ENCODE measurements at regions of chr1 and their contacts with region 1.

Region 1: DNA sequence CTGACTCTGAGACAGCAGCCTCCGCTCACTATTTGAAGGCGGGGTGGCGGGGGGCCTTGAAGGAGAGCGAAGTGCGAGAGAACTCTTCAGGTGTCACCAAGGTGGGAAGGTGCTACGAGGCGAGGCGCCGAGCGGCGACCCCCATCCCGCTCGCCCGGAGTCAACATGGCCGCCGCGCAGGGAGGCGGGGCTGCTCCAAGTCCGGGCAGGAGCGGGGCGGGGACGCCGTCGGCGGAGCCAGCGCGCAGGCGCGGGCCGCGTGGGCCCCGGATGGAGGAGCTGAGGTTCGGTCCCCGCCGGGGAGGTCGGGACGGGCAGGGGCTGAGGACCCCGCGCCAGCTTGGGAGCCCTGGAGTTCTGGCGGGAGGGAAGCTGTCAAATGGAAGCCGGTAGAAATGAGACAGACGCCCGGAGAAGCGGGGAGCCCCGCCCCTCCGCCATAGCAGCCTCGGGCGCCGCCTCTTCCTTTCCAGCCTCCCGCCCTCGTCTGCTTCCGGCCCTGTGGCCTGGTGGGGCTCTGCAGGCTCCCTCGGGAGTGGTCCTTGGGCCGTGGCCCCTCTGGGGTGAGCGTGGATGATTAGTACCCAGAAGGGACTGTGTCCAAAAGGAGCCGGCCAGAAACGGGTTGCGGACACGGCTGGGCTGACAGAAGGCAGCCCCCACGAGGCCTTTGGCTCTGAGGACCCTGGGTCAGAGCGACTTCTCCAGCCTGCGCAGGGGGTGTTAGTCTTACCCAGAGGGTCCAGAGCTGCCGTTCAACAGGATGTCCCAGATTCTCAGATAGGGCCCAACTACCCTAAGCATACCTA is at the start of gene PIGV:
- DNase-seq: peak; percentile 97
- H3K4me3 Mint-ChIP-seq: peak within 1 kb of the TSS; percentile 100
- H3K27ac Mint-ChIP-seq: peak within 1 kb of the TSS; percentile 100
- H3K4me1 Mint-ChIP-seq: peaks cover 67% of the 10 kb centered on the region
- H3K27me3 Mint-ChIP-seq: no peaks in the 10 kb centered on the region
- total RNA-seq, gene PIGV: 15.2 and 16.0 TPM in 2 replicates

Region 2: GRCh38 chr1:26582836-26583460 is 205.0 kb before region 1 on chr1:
- intact Hi-C with region 1: loop called (anchors 1 kb)
- DNase-seq: peak; percentile 79
- H3K4me3 Mint-ChIP-seq: peak overlapping the region; percentile 47
- H3K27ac Mint-ChIP-seq: peak overlapping the region; percentile 92
- H3K4me1 Mint-ChIP-seq: peaks cover 48% of the 10 kb centered on the region
- H3K27me3 Mint-ChIP-seq: peaks cover 2% of the 10 kb centered on the region

Region 3: DNA sequence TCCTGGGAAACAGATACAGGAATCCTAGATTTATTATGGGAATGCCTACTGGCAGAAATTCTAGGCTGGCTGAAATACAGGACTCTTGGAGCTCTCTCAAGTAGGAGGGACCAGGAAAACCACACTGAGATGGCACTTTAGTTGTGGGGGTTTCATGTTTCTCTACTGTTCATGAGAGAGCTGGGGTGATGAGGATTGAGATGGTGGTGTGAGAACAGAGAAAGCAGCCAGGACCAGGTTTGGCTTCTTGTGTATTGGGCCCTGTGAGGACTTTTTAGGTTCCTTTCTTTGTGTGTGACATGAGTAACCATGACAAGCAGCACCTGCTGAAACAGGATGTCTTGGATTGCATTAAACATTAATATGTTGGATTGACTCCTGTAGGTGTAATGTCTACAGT is 87.2 kb before region 1 on chr1:
- intact Hi-C with region 1: loop called (anchors 1 kb)
- DNase-seq: no peak
- H3K4me3 Mint-ChIP-seq: no peak overlapping the region
- H3K27ac Mint-ChIP-seq: no peak overlapping the region
- H3K4me1 Mint-ChIP-seq: peaks cover 7% of the 10 kb centered on the region
- H3K27me3 Mint-ChIP-seq: no peaks in the 10 kb centered on the region

Region 4: DNA sequence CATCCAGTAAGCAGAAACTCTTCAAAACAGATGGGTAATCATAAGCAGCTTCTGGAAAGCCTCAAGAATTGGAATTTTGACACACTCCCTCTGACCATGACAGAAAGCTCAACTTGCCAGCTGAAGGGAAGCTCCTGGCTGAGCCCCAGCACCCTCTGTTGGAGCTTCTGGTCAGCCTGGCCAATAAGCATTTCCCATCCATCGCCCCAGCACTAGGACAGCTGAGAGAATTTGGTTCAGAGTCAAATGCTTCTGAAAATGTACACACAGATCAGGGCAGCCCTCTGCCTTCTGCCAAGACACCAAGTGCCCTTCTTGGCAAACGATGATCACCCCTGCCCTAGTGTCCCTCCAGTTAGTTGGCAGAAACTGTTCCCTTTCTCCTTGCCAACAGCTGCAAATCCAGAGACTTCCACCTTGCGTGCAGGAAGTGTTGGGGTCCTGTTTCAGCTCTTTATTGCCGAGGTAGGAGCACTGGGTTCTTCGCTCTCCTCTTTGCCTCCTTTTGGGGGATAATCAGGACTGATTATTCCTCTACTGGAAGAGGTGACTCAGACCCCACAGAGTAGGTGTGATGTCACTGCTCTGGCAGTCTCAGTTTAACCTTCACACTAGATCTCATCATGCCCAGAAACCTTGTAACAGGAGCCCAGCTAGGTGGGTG is 11.7 kb after region 1 on chr1:
- intact Hi-C with region 1: loop called (anchors 1 kb)
- DNase-seq: peak; percentile 67
- H3K4me3 Mint-ChIP-seq: peak overlapping the region; percentile 76
- H3K27ac Mint-ChIP-seq: peak overlapping the region; percentile 89
- H3K4me1 Mint-ChIP-seq: peaks cover 53% of the 10 kb centered on the region
- H3K27me3 Mint-ChIP-seq: no peaks in the 10 kb centered on the region

Region 5: DNA sequence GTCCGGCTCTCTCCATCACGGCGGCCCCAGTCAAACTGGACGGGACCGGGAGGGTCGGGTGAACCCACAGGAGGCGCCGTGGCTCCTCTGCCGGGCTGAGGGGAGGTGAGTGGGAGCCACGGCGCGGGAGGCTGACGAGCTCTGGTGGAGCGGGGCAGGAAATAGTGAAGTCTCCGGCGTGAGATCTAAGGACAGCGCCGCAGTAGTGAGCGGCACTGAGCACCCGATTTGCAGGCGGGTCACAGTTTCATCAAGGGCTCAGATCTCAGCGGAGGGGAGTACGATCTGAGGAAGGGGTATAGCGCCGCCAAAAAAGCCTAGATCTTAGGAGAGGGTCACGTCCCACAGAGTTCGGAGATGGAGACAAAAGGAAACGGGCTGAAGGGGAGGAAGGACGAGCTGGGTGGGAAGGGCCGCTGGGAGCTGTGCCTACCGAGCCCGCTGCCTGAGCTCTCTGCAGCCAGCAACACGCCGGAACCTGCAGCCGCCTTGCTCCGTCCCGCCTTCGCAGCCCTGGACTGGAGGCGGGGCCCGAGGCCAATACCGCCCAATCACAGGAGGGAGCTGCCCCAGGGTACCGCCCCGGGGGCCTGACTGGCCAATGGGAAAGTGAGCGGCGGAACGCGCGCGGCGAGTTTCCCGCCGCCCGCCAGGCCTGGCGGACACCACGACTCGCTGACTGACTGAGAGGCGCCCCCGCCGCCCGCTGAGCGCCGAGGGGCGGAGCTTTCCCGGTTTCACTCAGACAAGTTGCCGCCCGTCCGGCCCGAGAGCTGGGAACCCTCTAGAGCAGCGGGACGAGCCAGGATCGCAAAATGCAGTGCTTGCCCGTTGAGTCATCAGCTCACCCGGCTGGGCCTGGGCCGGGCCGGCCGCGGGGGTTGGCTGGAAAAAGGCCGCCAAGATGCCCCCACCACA is 77.0 kb after region 1 on chr1:
- intact Hi-C with region 1: loop called (anchors 2 kb)
- DNase-seq: peak; percentile 99
- H3K4me3 Mint-ChIP-seq: peak overlapping the region; percentile 89
- H3K27ac Mint-ChIP-seq: peak overlapping the region; percentile 90
- H3K4me1 Mint-ChIP-seq: peaks cover 28% of the 10 kb centered on the region
- H3K27me3 Mint-ChIP-seq: no peaks in the 10 kb centered on the region